ENCODE measurements at regions of chr7 and their contacts with region 1.

Region 1: GRCh38 chr7:44587843-44588711 is 6.0 kb upstream of the TMED4 start:
- DNase-seq: peak; percentile 69 to 74
- H3K4me3 ChIP-seq: no peak overlapping the region
- H3K27ac ChIP-seq: no peak overlapping the region
- H3K4me1 ChIP-seq: peaks cover 11% of the 10 kb centered on the region
- H3K27me3 ChIP-seq: no peaks in the 10 kb centered on the region
- CTCF ChIP-seq: peak; percentile 95

Region 2: DNA sequence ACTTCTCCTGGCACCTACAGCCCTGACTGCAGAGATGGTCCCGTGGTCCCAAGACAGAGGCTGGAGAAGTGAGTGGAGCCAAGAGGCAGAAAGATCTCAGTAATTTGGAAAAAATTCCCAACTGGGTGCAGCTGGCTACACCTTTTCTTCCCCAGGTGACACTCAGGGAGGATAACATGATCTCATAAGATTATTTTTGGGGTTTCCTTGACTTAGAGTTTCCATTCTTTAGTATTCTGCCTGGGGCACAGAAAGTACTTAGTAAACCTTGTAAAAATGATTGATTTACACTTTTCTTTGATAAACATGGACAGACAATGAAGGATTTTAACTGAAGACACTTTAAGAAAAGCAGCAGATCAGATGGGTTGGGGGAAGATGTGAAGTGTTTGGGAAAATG is 1437.0 kb before region 1 on chr7:
- CTCF ChIA-PET with region 1: no interaction called
- POLR2A ChIA-PET with region 1: no interaction called
- intact Hi-C with region 1: no loop called
- DNase-seq: no peak
- H3K4me3 ChIP-seq: no peak overlapping the region
- H3K27ac ChIP-seq: no peak overlapping the region
- H3K4me1 ChIP-seq: no peaks in the 10 kb centered on the region
- H3K27me3 ChIP-seq: no peaks in the 10 kb centered on the region
- CTCF ChIP-seq: no peak

Region 3: DNA sequence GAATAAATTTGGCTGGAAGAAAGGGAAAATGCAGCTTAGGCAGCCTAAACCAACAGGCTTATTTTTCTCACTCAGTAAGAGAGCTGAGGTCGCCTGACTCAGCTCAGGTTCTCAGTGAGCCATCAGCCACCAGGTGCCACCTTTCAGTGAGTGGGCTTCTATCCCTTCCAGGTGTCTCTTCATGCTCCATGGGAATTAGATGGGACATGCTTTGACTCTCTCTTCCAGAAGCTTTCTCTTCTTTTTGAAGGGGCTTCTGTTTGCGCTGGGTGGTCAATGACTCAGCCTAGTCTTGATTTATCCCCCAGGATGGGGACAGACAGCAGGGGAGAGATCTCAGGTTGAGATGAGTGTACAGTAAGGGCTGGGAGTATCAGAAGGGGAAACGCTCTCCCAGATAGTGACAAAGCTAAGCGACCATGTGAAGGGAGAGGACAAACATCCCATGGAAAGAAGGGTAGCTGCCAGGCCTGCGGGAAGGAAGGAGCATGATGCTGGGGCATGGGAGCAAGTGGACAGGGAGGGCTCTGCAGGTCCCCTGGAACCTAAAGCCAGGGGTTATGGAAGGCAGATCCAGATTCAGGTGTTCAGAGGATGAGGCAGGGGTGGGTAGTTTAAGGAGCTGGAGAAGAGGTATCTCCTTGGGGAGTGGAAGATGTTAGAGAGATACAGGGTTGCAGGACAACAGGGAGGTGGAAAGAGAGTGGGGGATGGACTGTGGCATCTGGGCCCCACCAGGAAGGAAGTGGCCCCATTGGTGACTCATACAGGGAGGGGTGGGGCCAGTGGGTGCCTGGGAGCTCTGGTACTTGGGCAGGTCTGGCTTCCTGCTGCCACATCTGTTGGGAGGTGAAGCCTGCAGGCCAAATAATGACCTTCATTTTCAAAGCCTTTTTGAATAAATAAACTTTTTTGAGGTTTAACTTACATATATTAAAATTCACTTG is 50.8 kb after region 1 on chr7:
- CTCF ChIA-PET with region 1: interaction called, 5 read pairs
- POLR2A ChIA-PET with region 1: interaction called, 6 read pairs
- intact Hi-C with region 1: loop called (anchors 1 kb)
- DNase-seq: peak; percentile 90 to 93
- H3K4me3 ChIP-seq: peak overlapping the region; percentile 12; the same call in 1 of the 2 replicates
- H3K27ac ChIP-seq: peak overlapping the region; percentile 96
- H3K4me1 ChIP-seq: peaks cover 67% of the 10 kb centered on the region
- H3K27me3 ChIP-seq: no peaks in the 10 kb centered on the region
- CTCF ChIP-seq: no peak; the same call in 1 of the 2 replicates

Region 4: DNA sequence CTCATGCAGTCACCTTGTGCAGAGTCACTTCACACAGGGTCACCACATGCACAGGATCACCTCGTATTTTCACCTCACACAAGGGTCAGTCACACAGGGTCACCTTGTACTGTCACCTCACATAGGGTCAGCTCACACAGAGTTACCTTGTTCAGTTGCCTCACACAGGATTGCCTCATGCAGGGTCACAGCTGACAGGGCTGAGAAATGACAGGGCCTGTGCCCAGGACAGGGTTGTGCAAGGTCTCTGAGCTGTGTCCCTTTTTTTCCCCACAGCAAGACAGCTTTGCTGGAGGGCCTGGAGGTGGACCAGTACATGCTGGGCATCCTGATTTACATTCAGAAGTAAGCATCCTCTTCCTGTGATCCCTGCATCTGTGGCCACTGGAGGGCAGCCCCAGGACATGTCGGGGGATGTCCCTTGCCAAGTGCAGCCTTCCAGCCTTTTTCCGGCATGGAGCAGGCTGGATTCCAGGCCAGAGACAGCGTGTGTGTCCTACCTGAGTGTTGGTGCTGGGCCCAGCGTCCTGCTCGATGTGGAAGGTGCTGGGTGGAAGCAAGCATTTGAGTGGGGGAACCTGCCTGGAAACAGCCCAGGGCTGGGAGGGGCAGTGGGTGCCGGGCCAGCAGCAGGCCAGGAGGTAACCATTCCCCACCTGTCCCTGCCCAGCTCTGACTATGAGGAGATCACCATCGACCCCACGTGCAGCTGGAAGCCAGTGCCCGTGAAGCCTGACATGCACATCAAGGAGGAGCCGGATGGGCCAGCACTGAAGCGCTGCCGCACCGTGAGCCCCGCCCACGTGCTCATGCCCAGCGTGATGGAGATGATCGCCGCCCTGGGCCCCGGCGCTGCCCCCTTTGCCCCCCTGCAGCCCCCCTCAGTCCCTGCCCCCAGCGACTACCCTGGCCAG is 176.8 kb after region 1 on chr7:
- CTCF ChIA-PET with region 1: no interaction called
- POLR2A ChIA-PET with region 1: no interaction called
- intact Hi-C with region 1: loop called (anchors 2 kb)
- DNase-seq: no peak
- H3K4me3 ChIP-seq: no peak overlapping the region
- H3K27ac ChIP-seq: no peak overlapping the region
- H3K4me1 ChIP-seq: peaks cover 5% of the 10 kb centered on the region
- H3K27me3 ChIP-seq: no peaks in the 10 kb centered on the region
- CTCF ChIP-seq: peak; percentile 52

Region 5: DNA sequence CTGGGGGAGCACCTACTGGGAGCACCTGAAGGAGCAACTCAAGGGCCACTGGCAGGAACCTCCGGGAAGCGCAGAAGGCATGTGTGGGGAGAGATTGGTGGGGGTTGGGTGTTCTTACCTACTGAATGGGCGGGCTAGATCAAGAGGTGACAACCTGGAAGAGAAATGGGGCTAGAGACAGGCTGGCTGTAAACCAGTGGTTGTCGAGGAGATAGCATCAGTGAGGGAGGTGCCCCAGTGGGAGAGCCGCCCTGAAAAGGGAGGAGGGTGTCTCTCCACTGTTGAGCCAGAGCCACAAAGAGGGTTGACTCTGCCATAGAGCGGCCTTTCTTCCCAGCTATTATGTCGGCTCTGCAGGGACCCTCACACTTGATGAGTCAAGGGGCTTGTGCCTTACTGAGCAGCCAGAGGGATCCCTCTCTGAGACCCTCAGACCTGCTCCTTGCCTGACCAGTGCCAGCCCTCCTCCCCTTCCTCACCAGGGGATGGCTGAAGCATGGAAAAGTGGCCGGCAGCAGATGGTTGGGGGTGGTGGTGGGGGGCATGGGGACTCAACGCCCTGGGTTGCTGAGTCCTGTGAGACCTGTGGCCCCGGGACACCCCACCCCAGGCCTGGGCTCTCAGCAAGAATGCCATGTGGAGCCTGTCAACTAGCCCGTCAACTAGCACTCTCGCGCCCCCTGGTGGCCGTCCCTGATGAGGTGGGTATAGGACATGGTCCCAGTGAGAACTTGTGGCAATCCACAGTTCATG is 333.7 kb after region 1 on chr7:
- CTCF ChIA-PET with region 1: interaction called, 3 read pairs
- POLR2A ChIA-PET with region 1: no interaction called
- intact Hi-C with region 1: loop called (anchors 1 kb)
- DNase-seq: peak; percentile 61 to 82
- H3K4me3 ChIP-seq: no peak overlapping the region
- H3K27ac ChIP-seq: no peak overlapping the region
- H3K4me1 ChIP-seq: no peaks in the 10 kb centered on the region
- H3K27me3 ChIP-seq: no peaks in the 10 kb centered on the region
- CTCF ChIP-seq: peak; percentile 99

Region 6: GRCh38 chr7:45259966-45260646 is 672.0 kb after region 1 on chr7:
- CTCF ChIA-PET with region 1: no interaction called
- POLR2A ChIA-PET with region 1: no interaction called
- intact Hi-C with region 1: loop called (anchors 5 kb)
- DNase-seq: peak in 1 of 2 experiments; percentile 62
- H3K4me3 ChIP-seq: no peak overlapping the region
- H3K27ac ChIP-seq: no peak overlapping the region
- H3K4me1 ChIP-seq: no peaks in the 10 kb centered on the region
- H3K27me3 ChIP-seq: peaks cover 64% of the 10 kb centered on the region
- CTCF ChIP-seq: peak; percentile 100